Pancreas (tissue), 10 donors: ENCODE measurements at regions of chr3 and their contacts with region 1.

Region 1: GRCh38 chr3:157130467-157131251 is 29.3 kb downstream of the CCNL1 start:
- DNase-seq: peak in 2 of 6 donors; percentile 55 to 65
- ATAC-seq: peak in 1 of 4 donors; percentile 3
- H3K4me3 ChIP-seq: no peak overlapping the region
- H3K27ac ChIP-seq: peak overlapping the region; percentile 47 to 88 (median 80)
- H3K4me1 ChIP-seq: peaks cover 52 to 79% (median 74%) of the 10 kb centered on the region in 3 donors
- H3K27me3 ChIP-seq: no peaks in the 10 kb centered on the region
- CTCF ChIP-seq: peak in 3 of 4 donors; percentile 32 to 43 (median 34)

Region 2: GRCh38 chr3:156535162-156535627 is 595.5 kb before region 1 on chr3:
- intact Hi-C with region 1: loop called in 1 of 3 experiments (anchors 10 kb)
- DNase-seq: peak in 4 of 6 donors; percentile 53 to 75 (median 62)
- ATAC-seq: peak; percentile 86 to 94 (median 91)
- H3K4me3 ChIP-seq: no peak overlapping the region
- H3K27ac ChIP-seq: peak overlapping the region; percentile 46 to 81 (median 64)
- H3K4me1 ChIP-seq: peaks cover 14 to 32% (median 24%) of the 10 kb centered on the region in 3 donors
- H3K27me3 ChIP-seq: no peaks in the 10 kb centered on the region
- CTCF ChIP-seq: no peak

Region 3: DNA sequence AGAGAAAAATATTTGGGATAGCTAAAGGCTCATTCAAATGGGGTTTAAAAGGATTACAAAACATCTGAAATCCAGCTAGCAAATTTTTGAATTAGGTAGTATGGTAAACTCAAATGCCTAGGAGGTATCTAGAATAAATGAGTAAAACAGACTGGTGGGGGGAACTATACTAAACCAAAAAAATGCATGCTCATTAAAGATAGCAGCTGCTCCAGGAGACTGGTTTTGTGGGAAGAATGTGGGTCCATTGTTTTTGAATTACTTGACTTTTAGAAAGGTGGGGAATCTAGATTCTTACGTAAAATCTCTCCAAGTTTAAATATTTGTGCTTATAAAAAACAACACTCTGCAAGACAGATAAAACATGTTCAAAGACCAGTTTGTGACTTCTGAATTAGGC is 230.7 kb before region 1 on chr3:
- intact Hi-C with region 1: no loop called
- DNase-seq: no peak
- ATAC-seq: no peak
- H3K4me3 ChIP-seq: no peak overlapping the region
- H3K27ac ChIP-seq: no peak overlapping the region
- H3K4me1 ChIP-seq: no peaks in the 10 kb centered on the region
- H3K27me3 ChIP-seq: no peaks in the 10 kb centered on the region
- CTCF ChIP-seq: no peak

Region 4: GRCh38 chr3:156943430-156943829 is 187.2 kb before region 1 on chr3:
- intact Hi-C with region 1: no loop called
- DNase-seq: no peak
- ATAC-seq: no peak
- H3K4me3 ChIP-seq: no peak overlapping the region
- H3K27ac ChIP-seq: no peak overlapping the region
- H3K4me1 ChIP-seq: no peaks in the 10 kb centered on the region
- H3K27me3 ChIP-seq: no peaks in the 10 kb centered on the region
- CTCF ChIP-seq: no peak

Region 5: GRCh38 chr3:157088601-157089454 is 41.8 kb before region 1 on chr3:
- intact Hi-C with region 1: loop called in 2 of 3 experiments (anchors 5 kb)
- DNase-seq: peak; percentile 94 to 99 (median 97)
- ATAC-seq: peak; percentile 87 to 91 (median 90)
- H3K4me3 ChIP-seq: peak overlapping the region; percentile 44 to 62 (median 53)
- H3K27ac ChIP-seq: peak overlapping the region; percentile 98 to 100 (median 98)
- H3K4me1 ChIP-seq: peaks cover 27 to 38% (median 33%) of the 10 kb centered on the region in 3 donors
- H3K27me3 ChIP-seq: no peaks in the 10 kb centered on the region
- CTCF ChIP-seq: no peak